WTC11 (cell line): ENCODE measurements at regions of chr17 and their contacts with region 1.

Region 1: GRCh38 chr17:50865984-50866774 is at the start of gene TOB1:
- DNase-seq: peak; percentile 97
- ATAC-seq: peak; percentile 78
- H3K4me3 Mint-ChIP-seq: peak within 1 kb of the TSS; percentile 96
- H3K27ac Mint-ChIP-seq: peak within 1 kb of the TSS; percentile 100
- H3K4me1 Mint-ChIP-seq: peaks cover 30% of the 10 kb centered on the region
- H3K27me3 Mint-ChIP-seq: no peaks in the 10 kb centered on the region
- CTCF ChIP-seq: no peak
- total RNA-seq, gene TOB1: 33.5 to 37.9 TPM (median 36.0 TPM) in 3 replicates

Region 2: DNA sequence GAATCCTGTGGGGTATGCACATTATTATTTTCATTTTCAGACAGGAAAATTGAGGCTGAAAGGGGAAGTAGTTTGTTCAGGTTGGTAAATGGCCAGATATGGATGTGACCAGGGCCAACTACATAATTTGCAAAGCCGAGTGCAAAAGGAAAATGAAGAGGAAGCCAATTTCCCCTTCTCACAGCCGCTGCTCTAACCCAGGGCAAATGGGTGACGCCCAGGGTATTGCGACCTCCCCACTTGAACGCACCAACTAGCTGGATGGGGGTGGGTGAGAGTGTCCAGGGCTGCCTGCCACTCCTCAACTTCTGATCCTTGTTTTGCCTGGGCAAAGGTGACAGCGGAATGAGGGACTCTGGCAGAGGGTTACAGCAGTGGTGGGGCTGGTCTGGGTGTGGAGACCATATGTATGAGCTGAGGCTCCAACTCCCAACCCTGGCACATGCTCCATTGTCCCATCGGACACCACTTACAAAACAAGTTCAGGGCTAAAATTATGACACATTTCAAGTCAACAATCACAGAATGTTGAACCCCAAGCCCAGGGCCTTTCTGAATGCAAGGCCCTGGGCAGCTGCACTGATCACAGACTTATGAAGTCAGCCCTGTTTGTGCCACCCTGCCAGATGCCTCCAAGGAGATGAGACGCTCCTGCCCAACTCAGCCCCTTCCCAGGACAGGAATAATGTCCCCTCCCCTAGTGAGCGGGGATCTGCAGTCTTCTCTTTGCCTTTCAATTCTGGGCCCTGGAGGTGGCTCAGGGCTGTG is 100.5 kb before region 1 on chr17:
- CTCF ChIA-PET with region 1: interaction called, 4 read pairs
- POLR2A ChIA-PET with region 1: interaction called, 16 read pairs
- DNase-seq: no peak
- ATAC-seq: no peak
- H3K4me3 Mint-ChIP-seq: no peak overlapping the region
- H3K27ac Mint-ChIP-seq: peak overlapping the region; percentile 33; the same call in 1 of the 2 replicates
- H3K4me1 Mint-ChIP-seq: peaks cover 16% of the 10 kb centered on the region
- H3K27me3 Mint-ChIP-seq: no peaks in the 10 kb centered on the region; the same call in 1 of the 2 replicates
- CTCF ChIP-seq: no peak

Region 3: DNA sequence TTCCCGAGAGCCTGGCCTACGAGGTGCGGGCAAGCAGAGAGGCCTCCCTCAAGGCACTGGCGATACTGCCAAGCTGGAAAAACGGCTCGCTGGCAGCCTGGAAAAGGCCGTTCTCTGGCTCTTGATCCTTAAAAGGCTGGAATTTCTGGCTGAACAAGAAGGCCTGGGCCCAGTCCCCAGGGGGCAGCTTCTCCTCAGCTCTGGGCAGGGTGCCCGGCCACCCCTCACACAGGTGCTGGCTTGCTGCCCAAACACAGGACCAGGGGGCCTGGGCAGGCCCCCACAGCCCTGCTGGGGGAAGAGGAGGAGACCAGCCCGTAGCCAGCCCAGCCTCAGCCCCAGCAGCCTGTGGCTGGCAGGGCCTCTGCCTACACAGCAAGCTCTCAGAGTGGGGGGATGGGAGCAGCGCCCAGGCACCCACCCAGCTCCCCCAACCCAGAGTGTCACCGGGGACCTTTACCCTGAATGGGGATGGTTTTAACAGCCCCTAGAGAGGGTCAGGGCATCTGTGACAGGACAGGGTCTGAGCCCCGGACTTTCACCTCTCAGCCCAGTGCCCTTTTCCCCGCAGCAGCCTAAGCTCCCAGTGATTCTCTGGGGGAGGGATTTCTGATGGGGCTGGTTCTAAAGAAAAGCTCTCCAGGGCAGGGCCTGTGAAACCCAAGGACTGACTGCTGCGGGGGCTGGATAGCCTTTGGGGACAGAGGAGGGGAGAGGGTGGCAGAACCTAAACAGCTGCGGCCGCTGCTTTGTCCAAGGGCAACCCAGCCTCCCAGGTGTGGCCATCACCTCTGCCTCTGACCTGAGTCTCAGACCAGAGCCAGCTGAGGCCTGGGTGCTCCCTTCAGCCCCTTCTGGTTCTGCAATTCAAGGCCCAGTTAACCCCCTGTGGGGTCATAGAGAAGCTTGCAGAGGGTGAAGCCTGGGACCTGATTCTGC is 38.6 kb after region 1 on chr17:
- CTCF ChIA-PET with region 1: interaction called, 10 read pairs
- POLR2A ChIA-PET with region 1: interaction called, 47 read pairs
- DNase-seq: no peak
- ATAC-seq: peak; percentile 35
- H3K4me3 Mint-ChIP-seq: no peak overlapping the region
- H3K27ac Mint-ChIP-seq: no peak overlapping the region
- H3K4me1 Mint-ChIP-seq: peaks cover 58% of the 10 kb centered on the region
- H3K27me3 Mint-ChIP-seq: no peaks in the 10 kb centered on the region
- CTCF ChIP-seq: no peak

Region 4: DNA sequence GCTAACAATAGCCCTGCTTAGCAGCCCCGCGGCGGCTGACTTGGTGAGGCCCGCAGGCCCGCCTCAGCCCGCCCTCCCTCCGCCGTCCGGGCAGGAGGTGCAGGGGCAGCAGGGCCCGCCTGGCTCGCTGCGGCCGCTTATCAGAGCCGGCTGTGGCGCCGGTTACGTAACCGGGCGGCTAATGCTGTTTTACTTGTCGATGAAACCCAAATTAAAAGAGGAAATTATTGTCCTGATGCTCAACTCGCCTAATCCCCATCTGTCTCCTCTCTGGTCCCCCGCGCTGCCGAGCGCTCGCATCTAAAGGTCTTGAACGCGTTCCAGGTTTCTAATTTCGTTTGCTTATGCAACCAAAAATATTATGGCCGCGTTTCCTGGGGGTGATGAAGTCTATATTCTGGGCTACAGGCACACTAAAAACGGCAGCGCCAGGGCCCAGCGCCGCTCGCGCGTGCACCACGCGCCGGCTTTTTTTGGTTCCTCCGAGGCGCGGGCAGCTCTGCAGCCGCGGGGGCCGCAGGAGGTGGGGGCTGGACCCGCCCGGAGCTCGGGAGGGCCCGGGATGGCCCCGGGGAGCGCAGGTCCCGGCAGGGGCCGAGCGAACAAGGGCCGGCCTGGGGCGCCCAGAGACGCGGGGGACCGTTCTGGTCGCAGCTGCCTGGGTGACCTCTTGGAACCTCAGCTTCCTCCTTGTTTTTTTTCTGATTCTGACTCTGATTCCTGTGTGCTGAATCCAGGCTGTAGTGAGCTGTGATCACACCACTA is 65.1 kb after region 1 on chr17:
- CTCF ChIA-PET with region 1: interaction called, 9 read pairs
- POLR2A ChIA-PET with region 1: interaction called, 22 read pairs
- DNase-seq: peak; percentile 74
- ATAC-seq: peak; percentile 91
- H3K4me3 Mint-ChIP-seq: peak overlapping the region; percentile 75
- H3K27ac Mint-ChIP-seq: no peak overlapping the region
- H3K4me1 Mint-ChIP-seq: peaks cover 18% of the 10 kb centered on the region
- H3K27me3 Mint-ChIP-seq: peaks cover 28% of the 10 kb centered on the region
- CTCF ChIP-seq: no peak

Region 5: GRCh38 chr17:50949989-50950881 is 84.1 kb after region 1 on chr17:
- CTCF ChIA-PET with region 1: interaction called, 75 read pairs
- POLR2A ChIA-PET with region 1: interaction called, 34 read pairs
- DNase-seq: peak; percentile 80
- ATAC-seq: peak; percentile 79
- H3K4me3 Mint-ChIP-seq: peak overlapping the region; percentile 14; the same call in 1 of the 2 replicates
- H3K27ac Mint-ChIP-seq: peak overlapping the region; percentile 58; the same call in 1 of the 2 replicates
- H3K4me1 Mint-ChIP-seq: peaks cover 64% of the 10 kb centered on the region
- H3K27me3 Mint-ChIP-seq: no peaks in the 10 kb centered on the region
- CTCF ChIP-seq: peak; percentile 53